ENCODE measurements at regions of chr1 and their contacts with region 1.

Region 1: DNA sequence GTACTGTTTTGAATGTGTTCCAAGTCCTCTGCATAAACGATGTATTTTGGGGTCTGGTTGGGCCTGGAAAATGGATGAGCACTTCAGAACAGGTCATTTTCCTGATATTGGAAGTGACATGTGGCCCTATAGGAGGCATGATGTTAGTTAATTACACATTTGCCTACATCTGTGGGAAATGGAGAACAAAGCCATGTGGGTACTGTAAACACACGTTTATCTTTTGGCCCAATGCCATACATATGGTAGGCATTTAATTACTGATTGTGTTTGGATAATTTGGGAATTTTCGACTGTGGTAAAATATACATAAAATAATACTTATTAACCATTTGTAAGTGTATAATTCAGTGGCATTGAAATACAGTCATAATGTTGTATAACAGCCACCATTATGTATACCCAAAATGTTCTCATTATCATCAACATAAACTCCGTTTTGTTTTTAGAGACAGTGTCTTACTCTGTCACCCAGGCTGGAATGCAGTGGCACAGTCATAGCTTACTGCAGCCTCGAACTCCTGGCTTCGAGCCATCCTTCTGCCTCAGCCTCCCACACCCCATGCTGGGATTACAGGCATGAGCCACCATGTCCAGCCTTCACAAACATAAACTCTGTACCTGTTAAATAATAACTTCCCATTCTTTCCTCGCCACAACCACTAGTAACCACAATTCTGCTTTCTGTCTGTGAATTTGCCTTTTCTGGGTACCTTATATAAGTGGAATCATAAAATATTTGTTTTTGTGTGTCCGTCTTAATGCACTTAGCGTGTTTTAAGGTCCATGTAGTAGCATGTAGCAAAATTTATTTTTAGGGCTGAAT is 11.9 kb upstream of the RNPEP start:
- DNase-seq: no peak
- H3K4me3 Mint-ChIP-seq: no peak overlapping the region
- H3K27ac Mint-ChIP-seq: no peak overlapping the region
- H3K4me1 Mint-ChIP-seq: peaks cover 15% of the 10 kb centered on the region
- H3K27me3 Mint-ChIP-seq: peaks cover 8% of the 10 kb centered on the region
- CTCF ChIP-seq: no peak

Region 2: DNA sequence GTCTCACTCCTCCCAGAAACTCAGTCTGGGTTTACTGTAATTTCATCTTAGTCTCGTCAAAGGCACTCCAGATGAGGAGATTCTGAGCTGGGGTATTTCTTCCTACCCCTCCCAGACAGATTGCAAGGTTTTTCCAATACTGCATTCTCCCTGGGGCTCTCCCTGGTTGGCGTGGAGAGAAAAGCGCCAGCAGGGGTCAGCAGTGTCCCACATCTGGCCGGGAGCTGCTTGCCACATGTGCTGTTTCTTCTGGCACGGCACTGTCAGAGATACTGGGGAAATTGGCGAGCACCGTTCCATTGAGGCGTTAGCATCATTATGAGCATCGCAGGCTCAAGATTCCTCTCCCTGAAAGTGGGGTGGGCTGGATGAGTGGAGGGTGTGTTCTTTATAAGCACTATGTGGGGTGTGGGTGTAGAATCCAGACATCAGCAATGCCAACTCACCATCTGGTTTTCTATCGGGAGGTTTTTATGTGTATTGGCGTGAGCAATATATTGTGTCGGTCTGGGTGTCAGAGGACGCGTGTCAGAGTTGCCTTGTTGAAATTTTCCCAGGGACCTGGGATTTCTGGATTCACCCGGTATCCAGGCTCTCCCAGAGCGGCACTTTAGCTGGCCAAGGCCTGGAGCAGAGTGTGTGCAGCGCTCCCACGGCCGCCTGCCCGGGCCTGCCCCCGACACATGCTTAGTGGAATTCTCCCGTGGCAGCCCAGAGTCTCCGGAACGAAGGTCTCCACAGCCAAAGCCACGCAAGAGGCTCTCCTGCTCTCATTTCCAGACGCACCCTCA is 439.6 kb before region 1 on chr1:
- CTCF ChIA-PET with region 1: interaction called, 9 read pairs
- POLR2A ChIA-PET with region 1: no interaction called
- intact Hi-C with region 1: loop called (anchors 1 kb)
- DNase-seq: peak; percentile 91
- H3K4me3 Mint-ChIP-seq: no peak overlapping the region
- H3K27ac Mint-ChIP-seq: peak overlapping the region; percentile 46
- H3K4me1 Mint-ChIP-seq: peaks cover 9% of the 10 kb centered on the region
- H3K27me3 Mint-ChIP-seq: no peaks in the 10 kb centered on the region
- CTCF ChIP-seq: peak; percentile 99

Region 3: DNA sequence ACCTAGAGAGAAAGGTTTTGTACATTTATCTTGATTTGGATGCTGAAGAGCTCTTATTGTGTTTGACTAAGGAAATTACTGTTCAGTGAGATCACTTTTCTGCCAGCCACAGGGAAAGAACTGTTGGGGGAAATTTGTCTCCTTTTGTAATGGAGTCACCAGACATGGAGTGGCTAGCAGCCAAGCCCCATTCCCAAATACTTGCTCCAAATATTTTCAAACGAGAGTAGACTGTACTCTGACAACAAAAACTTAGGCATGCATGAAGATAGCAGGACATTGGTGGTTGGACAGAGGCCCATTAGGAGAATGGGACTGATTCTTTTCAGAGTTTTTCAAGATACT is 120.5 kb before region 1 on chr1:
- CTCF ChIA-PET with region 1: interaction called, 10 read pairs
- POLR2A ChIA-PET with region 1: interaction called, 6 read pairs
- intact Hi-C with region 1: no loop called
- DNase-seq: peak; percentile 51
- H3K4me3 Mint-ChIP-seq: no peak overlapping the region
- H3K27ac Mint-ChIP-seq: peak overlapping the region; percentile 58
- H3K4me1 Mint-ChIP-seq: peaks cover 41% of the 10 kb centered on the region
- H3K27me3 Mint-ChIP-seq: no peaks in the 10 kb centered on the region
- CTCF ChIP-seq: no peak

Region 4: GRCh38 chr1:201955009-201955728 is 15.4 kb before region 1 on chr1 and contains the start of gene TIMM17A:
- CTCF ChIA-PET with region 1: interaction called, 53 read pairs
- POLR2A ChIA-PET with region 1: interaction called, 87 read pairs
- intact Hi-C with region 1: no loop called
- DNase-seq: peak; percentile 100
- H3K4me3 Mint-ChIP-seq: peak within 1 kb of the TSS; percentile 96
- H3K27ac Mint-ChIP-seq: peak within 1 kb of the TSS; percentile 99
- H3K4me1 Mint-ChIP-seq: peaks cover 12% of the 10 kb centered on the region
- H3K27me3 Mint-ChIP-seq: no peaks in the 10 kb centered on the region
- CTCF ChIP-seq: no peak
- total RNA-seq, gene TIMM17A: 157 and 171 TPM in 2 replicates

Region 5: DNA sequence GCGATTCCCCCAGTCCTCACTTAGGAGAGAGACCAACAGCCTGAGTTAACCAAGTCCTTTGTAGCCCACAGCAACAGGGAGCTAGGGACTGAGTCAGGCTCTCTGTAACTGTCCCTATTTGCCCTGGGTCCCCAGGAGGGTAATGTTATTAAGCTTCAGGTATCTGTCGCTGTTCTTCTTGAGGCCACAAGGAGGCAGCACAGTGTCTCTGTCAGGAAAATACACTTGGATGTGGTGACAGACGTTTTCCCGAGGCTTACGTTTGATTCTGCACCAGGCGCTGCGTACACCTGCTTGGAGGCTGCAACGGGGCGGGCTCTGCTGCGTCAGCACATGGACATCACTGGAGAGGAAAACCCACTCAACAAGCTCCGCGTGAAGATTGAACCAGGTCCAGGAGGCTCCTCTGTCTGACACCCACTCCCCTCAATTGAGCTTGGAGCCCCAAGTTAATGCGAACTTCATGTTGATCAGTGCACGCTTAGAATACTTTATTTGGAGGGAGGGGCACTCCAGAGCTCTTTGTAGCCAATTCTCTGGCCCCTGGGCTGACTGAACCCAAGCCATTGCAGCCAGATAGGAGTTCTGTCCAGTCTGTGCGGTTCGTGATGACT is 29.2 kb after region 1 on chr1:
- CTCF ChIA-PET with region 1: interaction called, 16 read pairs
- POLR2A ChIA-PET with region 1: no interaction called
- intact Hi-C with region 1: no loop called
- DNase-seq: peak; percentile 81
- H3K4me3 Mint-ChIP-seq: no peak overlapping the region
- H3K27ac Mint-ChIP-seq: no peak overlapping the region
- H3K4me1 Mint-ChIP-seq: no peaks in the 10 kb centered on the region
- H3K27me3 Mint-ChIP-seq: no peaks in the 10 kb centered on the region
- CTCF ChIP-seq: peak; percentile 78